Testis (tissue), 5 donors: ENCODE measurements at regions of chr11 and their contacts with region 1.

Region 1: DNA sequence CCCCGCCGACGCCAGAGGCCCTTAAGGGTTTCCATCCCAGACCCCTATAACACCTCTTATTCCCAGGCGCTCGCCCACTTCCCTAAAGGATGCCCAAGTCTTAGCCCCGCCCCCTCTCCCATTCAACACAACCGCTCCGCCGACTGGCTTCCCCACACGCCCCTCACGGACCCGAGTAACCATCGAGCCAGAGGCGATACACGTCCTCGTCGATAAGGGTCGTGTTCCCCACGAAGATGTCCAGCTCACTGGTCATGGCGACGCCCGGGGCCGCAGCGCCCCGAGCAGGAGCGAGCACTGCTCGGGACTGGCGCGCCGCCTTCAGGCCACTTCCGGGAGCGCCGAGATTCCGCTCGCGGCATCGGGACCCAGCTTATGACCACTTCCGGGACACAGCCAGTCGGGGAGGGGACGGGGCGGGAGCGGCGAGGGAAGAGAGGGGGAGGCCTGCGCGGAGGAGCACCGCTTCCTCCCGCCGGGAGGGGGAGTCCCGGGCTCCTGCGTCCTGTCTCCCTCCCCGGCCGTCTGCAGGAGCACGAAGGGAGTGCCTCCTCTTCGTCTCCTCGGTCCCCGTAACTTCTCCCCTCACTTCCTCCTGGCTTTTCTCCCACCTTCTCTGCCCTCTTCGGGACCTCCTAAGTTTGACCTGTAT is at the start of gene FIBP:
- DNase-seq: peak; percentile 97
- H3K4me3 ChIP-seq: peak within 1 kb of the TSS; percentile 73 to 83
- H3K27ac ChIP-seq: peak within 1 kb of the TSS; percentile 91 to 97
- H3K4me1 ChIP-seq: peaks cover 38% of the 10 kb centered on the region
- H3K27me3 ChIP-seq: no peaks in the 10 kb centered on the region
- CTCF ChIP-seq: peak; percentile 74 to 93 (median 89)
- POLR2A ChIP-seq: peak; percentile 67
- total RNA-seq, gene FIBP: 144 to 149 TPM

Region 2: GRCh38 chr11:65856689-65857499 is 31.4 kb before region 1 on chr11:
- intact Hi-C with region 1: no loop called
- DNase-seq: peak; percentile 90
- H3K4me3 ChIP-seq: peak overlapping the region; percentile 85 to 97
- H3K27ac ChIP-seq: peak overlapping the region; percentile 88 to 94
- H3K4me1 ChIP-seq: peaks cover 13% of the 10 kb centered on the region
- H3K27me3 ChIP-seq: no peaks in the 10 kb centered on the region
- CTCF ChIP-seq: no peak
- POLR2A ChIP-seq: no peak

Region 3: DNA sequence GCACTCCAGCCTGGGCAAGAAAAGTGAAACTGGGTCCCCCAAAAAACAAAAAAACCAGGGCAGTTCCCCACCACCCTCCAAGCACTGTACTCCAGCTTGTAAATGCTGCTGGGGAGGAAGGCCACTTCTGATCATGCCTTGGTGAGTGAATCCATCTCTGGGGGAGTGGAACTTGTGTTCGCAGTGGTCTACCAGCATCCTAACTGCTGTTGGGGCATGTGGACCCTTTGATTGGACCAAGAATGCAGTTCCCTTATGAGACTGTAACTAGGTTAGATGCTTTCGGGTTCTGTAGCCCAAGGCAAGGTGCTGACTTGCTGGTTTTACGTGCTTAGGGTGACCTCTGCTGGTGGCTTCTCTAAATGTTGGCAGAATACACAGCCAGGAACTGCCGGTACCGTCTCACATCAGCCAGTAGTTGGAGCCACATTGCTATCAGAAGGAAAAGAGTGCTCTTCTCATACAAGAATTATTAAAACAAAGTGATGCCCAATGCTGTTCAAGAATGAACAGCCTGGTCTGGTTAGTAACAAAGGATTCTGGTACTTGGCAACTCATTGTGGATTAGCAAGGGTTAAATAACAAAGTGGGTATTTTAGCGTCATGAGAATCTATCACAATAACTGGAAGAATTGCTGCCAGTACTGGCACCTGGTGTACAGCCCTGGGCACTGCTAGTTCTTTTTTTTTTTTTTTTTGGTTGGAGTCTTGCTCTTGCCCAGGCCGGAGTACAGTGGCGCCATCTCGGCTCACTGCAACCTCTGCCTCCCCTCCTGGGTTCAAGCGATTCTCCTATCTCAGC is 100.7 kb after region 1 on chr11:
- intact Hi-C with region 1: loop called (anchors 10 kb)
- DNase-seq: peak; percentile 96
- H3K4me3 ChIP-seq: no peak overlapping the region
- H3K27ac ChIP-seq: no peak overlapping the region
- H3K4me1 ChIP-seq: no peaks in the 10 kb centered on the region
- H3K27me3 ChIP-seq: no peaks in the 10 kb centered on the region
- CTCF ChIP-seq: peak; percentile 86 to 97 (median 93)
- POLR2A ChIP-seq: no peak